Esophagus muscularis mucosa (tissue), 4 donors: ENCODE measurements at regions of chr10 and their contacts with region 1.

Region 1: GRCh38 chr10:13299437-13300287 is at the start of gene PHYH:
- DNase-seq: peak; percentile 96
- H3K4me3 ChIP-seq: peak within 1 kb of the TSS; percentile 66 to 96 (median 88)
- H3K27ac ChIP-seq: peak within 1 kb of the TSS; percentile 95 to 100 (median 98)
- H3K4me1 ChIP-seq: peaks cover 22 to 44% (median 39%) of the 10 kb centered on the region in 4 donors
- H3K27me3 ChIP-seq: peaks cover 0 to 5% (median 0%) of the 10 kb centered on the region in 4 donors
- CTCF ChIP-seq: no peak
- EP300 ChIP-seq: no peak
- POLR2A ChIP-seq: peak; percentile 52
- total RNA-seq, gene PHYH: 29.3 to 42.8 (median 38.4) TPM

Region 2: GRCh38 chr10:13160934-13161856 is 138.5 kb before region 1 on chr10 and contains the start of gene MCM10:
- intact Hi-C with region 1: loop called (anchors 5 kb)
- DNase-seq: peak; percentile 99
- H3K4me3 ChIP-seq: peak within 1 kb of the TSS; percentile 47 to 56 (median 50)
- H3K27ac ChIP-seq: peak within 1 kb of the TSS in 2 of 4 donors; percentile 22
- H3K4me1 ChIP-seq: peaks cover 10 to 16% (median 15%) of the 10 kb centered on the region in 4 donors
- H3K27me3 ChIP-seq: no peaks in the 10 kb centered on the region
- CTCF ChIP-seq: peak; percentile 82 to 87 (median 86)
- EP300 ChIP-seq: peak; percentile 39
- POLR2A ChIP-seq: no peak
- total RNA-seq, gene MCM10: 0.17 to 0.32 TPM in 2 of 4 donors, not detected in the others

Region 3: GRCh38 chr10:13348216-13349017 is 48.8 kb after region 1 on chr10 and contains the start of gene SEPHS1:
- intact Hi-C with region 1: loop called (anchors 2 kb)
- DNase-seq: no peak
- H3K4me3 ChIP-seq: peak within 1 kb of the TSS; percentile 71 to 96 (median 86)
- H3K27ac ChIP-seq: peak within 1 kb of the TSS; percentile 94 to 99 (median 98)
- H3K4me1 ChIP-seq: peaks cover 31 to 55% (median 43%) of the 10 kb centered on the region in 4 donors
- H3K27me3 ChIP-seq: peaks cover 0 to 17% (median 5%) of the 10 kb centered on the region in 4 donors
- CTCF ChIP-seq: peak in 1 of 3 experiments; percentile 5
- EP300 ChIP-seq: no peak
- POLR2A ChIP-seq: no peak
- total RNA-seq, gene SEPHS1: 37.0 to 53.1 (median 46.0) TPM

Region 4: DNA sequence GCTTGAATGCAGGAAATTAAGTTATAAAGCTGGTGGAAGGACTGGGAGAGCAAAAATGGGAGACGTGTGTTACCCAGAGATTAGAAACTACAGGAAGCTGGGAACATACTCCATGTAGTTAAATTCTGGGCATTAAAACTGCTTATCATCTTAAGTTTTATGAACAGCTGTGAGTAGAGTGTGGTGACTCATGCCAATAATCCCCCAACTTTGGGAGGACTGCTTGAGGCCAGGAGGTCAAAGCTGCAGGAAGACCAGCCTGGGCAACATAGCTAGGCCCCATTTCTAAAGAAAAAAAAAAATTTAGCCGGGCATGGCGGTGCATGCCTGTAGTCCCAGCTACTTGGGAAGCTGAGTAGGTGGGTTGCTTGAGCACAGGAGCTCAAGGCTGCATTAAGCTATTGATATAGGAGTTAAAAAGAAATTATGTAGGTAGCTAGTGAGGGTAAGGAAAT is 104.7 kb after region 1 on chr10:
- intact Hi-C with region 1: no loop called
- DNase-seq: no peak
- H3K4me3 ChIP-seq: no peak overlapping the region
- H3K27ac ChIP-seq: no peak overlapping the region
- H3K4me1 ChIP-seq: no peaks in the 10 kb centered on the region
- H3K27me3 ChIP-seq: no peaks in the 10 kb centered on the region
- CTCF ChIP-seq: no peak
- EP300 ChIP-seq: no peak
- POLR2A ChIP-seq: no peak

Region 5: GRCh38 chr10:13492493-13493175 is 193.0 kb after region 1 on chr10:
- intact Hi-C with region 1: no loop called
- DNase-seq: no peak
- H3K4me3 ChIP-seq: no peak overlapping the region
- H3K27ac ChIP-seq: no peak overlapping the region
- H3K4me1 ChIP-seq: no peaks in the 10 kb centered on the region
- H3K27me3 ChIP-seq: no peaks in the 10 kb centered on the region
- CTCF ChIP-seq: no peak
- EP300 ChIP-seq: no peak
- POLR2A ChIP-seq: no peak